Psoas muscle (tissue), 8 donors: ENCODE measurements at regions of chr17 and their contacts with region 1.

Region 1: GRCh38 chr17:32319548-32319905 is 22.4 kb downstream of the C17orf75 start:
- DNase-seq: peak; percentile 76 to 81
- ATAC-seq: peak; percentile 86 to 93 (median 88)
- H3K4me3 ChIP-seq: no peak overlapping the region
- H3K27ac ChIP-seq: no peak overlapping the region
- H3K4me1 ChIP-seq: no peaks in the 10 kb centered on the region
- H3K27me3 ChIP-seq: no peaks in the 10 kb centered on the region
- CTCF ChIP-seq: peak; percentile 89

Region 2: GRCh38 chr17:32253117-32253611 is 66.4 kb before region 1 on chr17:
- intact Hi-C with region 1: loop called (anchors 1 to 2 kb)
- DNase-seq: peak; percentile 75 to 81
- ATAC-seq: peak; percentile 86 to 97 (median 91)
- H3K4me3 ChIP-seq: no peak overlapping the region
- H3K27ac ChIP-seq: no peak overlapping the region
- H3K4me1 ChIP-seq: no peaks in the 10 kb centered on the region
- H3K27me3 ChIP-seq: no peaks in the 10 kb centered on the region
- CTCF ChIP-seq: peak; percentile 92